Esophagus squamous epithelium (tissue), 5 donors: ENCODE measurements at regions of chr3 and their contacts with region 1.

Region 1: GRCh38 chr3:73100741-73101559 is 39.5 kb downstream of the EBLN2 start:
- DNase-seq: no peak
- H3K4me3 ChIP-seq: no peak overlapping the region
- H3K27ac ChIP-seq: no peak overlapping the region
- H3K4me1 ChIP-seq: peaks cover 0 to 8% (median 3%) of the 10 kb centered on the region in 3 donors
- H3K27me3 ChIP-seq: no peaks in the 10 kb centered on the region
- CTCF ChIP-seq: peak; percentile 71 to 94 (median 89)
- POLR2A ChIP-seq: no peak

Region 2: GRCh38 chr3:73432023-73432705 is 331.2 kb after region 1 on chr3:
- intact Hi-C with region 1: loop called (anchors 10 kb)
- DNase-seq: no peak
- H3K4me3 ChIP-seq: no peak overlapping the region
- H3K27ac ChIP-seq: peak overlapping the region in 2 of 4 donors; percentile 24 to 48
- H3K4me1 ChIP-seq: peaks cover 0 to 52% (median 3%) of the 10 kb centered on the region in 3 donors
- H3K27me3 ChIP-seq: peaks cover 0 to 4% (median 0%) of the 10 kb centered on the region in 4 donors
- CTCF ChIP-seq: peak in 5 of 6 experiments; percentile 41 to 64 (median 56)
- POLR2A ChIP-seq: no peak

Region 3: DNA sequence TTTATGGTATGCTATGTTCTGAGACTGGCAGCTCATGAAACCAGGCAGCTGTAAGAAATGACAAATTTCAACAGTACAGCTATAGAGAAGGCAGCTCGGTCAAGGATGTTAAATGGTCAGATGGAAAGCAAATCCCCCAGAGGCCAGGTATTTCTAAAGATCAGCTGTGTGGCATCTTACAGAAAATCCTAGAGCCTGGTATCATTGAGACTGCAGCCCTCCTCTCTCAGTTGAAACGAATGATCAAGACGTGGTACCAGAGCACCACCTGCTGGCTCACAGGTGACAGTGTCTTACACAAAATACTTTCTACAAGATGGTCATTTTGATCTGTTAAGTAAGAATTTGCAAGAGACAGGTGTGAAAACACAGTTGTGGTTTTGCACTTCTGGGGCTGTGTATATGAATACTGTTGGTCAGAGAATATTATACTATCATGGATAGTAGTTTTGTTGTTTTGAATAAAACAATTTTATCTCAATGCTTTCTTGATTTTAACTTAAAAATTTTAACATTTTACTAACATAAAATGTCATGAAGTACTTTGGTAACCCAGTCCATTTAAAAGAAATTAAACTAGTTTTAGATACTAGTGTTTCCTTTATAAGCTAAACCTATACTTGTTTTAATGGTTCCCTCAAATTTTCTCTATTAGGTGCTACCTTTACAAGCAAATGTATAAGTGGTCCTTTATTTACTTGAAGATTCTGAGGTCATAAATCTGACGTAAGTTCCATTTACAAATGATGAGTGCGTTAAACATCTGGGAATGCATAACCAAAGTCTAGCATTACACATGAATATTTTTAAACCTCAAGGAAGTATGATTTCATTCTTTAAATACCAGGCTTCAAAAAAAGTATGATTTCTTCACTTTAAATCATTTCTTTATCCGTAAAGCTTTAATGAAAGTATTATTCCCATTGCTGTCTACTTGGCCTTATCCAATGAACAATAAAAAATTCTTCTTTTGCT is 401.9 kb after region 1 on chr3:
- intact Hi-C with region 1: loop called (anchors 5 kb)
- DNase-seq: no peak
- H3K4me3 ChIP-seq: no peak overlapping the region
- H3K27ac ChIP-seq: peak overlapping the region in 1 of 4 donors; percentile 1
- H3K4me1 ChIP-seq: peaks cover 0 to 22% (median 0%) of the 10 kb centered on the region in 3 donors
- H3K27me3 ChIP-seq: no peaks in the 10 kb centered on the region
- CTCF ChIP-seq: peak; percentile 17 to 82 (median 76)
- POLR2A ChIP-seq: no peak